B cell (primary cell): ENCODE measurements at regions of chr3 and their contacts with region 1.

Region 1: GRCh38 chr3:152524198-152525140 is 255.7 kb downstream of the MBNL1 start:
- DNase-seq: peak; percentile 76
- ATAC-seq: peak; percentile 68
- H3K4me3 ChIP-seq: no peak overlapping the region
- H3K4me3 Mint-ChIP-seq: no peak overlapping the region
- H3K27ac ChIP-seq: no peak overlapping the region
- H3K27ac Mint-ChIP-seq: no peak overlapping the region
- H3K4me1 ChIP-seq: peaks cover 5 to 6% of the 10 kb centered on the region in 2 donors
- H3K4me1 Mint-ChIP-seq: peaks cover 22% of the 10 kb centered on the region
- H3K27me3 ChIP-seq: no peaks in the 10 kb centered on the region
- H3K27me3 Mint-ChIP-seq: no peaks in the 10 kb centered on the region
- CTCF ChIP-seq: peak; percentile 98

Region 2: GRCh38 chr3:152071924-152072323 is 452.5 kb before region 1 on chr3:
- CTCF ChIA-PET with region 1: interaction called, 14 read pairs
- POLR2A ChIA-PET with region 1: no interaction called
- intact Hi-C with region 1: loop called (anchors 1 kb)
- DNase-seq: peak; percentile 30
- ATAC-seq: no peak
- H3K4me3 ChIP-seq: no peak overlapping the region
- H3K4me3 Mint-ChIP-seq: no peak overlapping the region
- H3K27ac ChIP-seq: no peak overlapping the region
- H3K27ac Mint-ChIP-seq: no peak overlapping the region
- H3K4me1 ChIP-seq: no peaks in the 10 kb centered on the region
- H3K4me1 Mint-ChIP-seq: no peaks in the 10 kb centered on the region
- H3K27me3 ChIP-seq: peaks cover 0 to 3% (median 0%) of the 10 kb centered on the region in 4 experiments
- H3K27me3 Mint-ChIP-seq: no peaks in the 10 kb centered on the region
- CTCF ChIP-seq: peak; percentile 49

Region 3: GRCh38 chr3:152466784-152467183 is 57.7 kb before region 1 on chr3:
- CTCF ChIA-PET with region 1: interaction called, 73 read pairs
- POLR2A ChIA-PET with region 1: no interaction called
- intact Hi-C with region 1: no loop called
- DNase-seq: peak; percentile 55
- ATAC-seq: peak; percentile 71
- H3K4me3 ChIP-seq: no peak overlapping the region
- H3K4me3 Mint-ChIP-seq: no peak overlapping the region
- H3K27ac ChIP-seq: peak overlapping the region in 1 of 2 donors; percentile 32
- H3K27ac Mint-ChIP-seq: peak overlapping the region; percentile 59
- H3K4me1 ChIP-seq: peaks cover 3 to 10% of the 10 kb centered on the region in 2 donors
- H3K4me1 Mint-ChIP-seq: peaks cover 20% of the 10 kb centered on the region
- H3K27me3 ChIP-seq: no peaks in the 10 kb centered on the region
- H3K27me3 Mint-ChIP-seq: no peaks in the 10 kb centered on the region
- CTCF ChIP-seq: peak; percentile 78

Region 4: DNA sequence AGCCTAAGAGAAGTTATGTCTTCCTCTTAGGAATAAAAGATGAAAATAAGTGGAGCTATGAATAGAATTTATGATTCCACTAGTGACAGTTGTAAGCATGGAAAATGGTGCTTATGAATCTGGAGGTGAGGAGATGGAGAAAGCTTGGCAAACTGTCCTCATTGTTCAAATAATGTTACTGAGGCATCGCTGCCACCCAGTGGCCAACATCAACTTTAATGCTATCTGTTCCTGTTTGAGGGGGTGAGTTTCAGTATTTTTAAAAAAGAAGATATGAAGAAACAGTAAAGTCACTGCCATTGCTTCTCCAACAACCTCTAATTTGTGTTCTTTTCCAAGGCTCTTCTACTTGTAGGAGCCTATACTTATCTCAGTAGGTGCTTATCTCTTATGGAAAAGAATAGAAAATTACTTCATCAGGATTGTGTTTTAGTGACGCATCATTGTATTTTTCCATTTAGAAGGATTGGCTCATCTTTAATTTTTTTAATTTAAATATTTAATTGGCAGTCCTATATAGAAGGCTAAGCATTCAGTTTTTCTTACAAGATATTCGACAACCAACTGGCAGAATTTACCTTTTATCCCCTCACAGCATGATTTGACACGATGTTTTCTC is 50.1 kb after region 1 on chr3:
- CTCF ChIA-PET with region 1: interaction called, 13 read pairs
- POLR2A ChIA-PET with region 1: no interaction called
- intact Hi-C with region 1: no loop called
- DNase-seq: peak; percentile 65
- ATAC-seq: peak; percentile 61
- H3K4me3 ChIP-seq: no peak overlapping the region
- H3K4me3 Mint-ChIP-seq: no peak overlapping the region
- H3K27ac ChIP-seq: no peak overlapping the region
- H3K27ac Mint-ChIP-seq: no peak overlapping the region
- H3K4me1 ChIP-seq: no peaks in the 10 kb centered on the region
- H3K4me1 Mint-ChIP-seq: peaks cover 2% of the 10 kb centered on the region
- H3K27me3 ChIP-seq: no peaks in the 10 kb centered on the region
- H3K27me3 Mint-ChIP-seq: no peaks in the 10 kb centered on the region
- CTCF ChIP-seq: peak; percentile 74

Region 5: DNA sequence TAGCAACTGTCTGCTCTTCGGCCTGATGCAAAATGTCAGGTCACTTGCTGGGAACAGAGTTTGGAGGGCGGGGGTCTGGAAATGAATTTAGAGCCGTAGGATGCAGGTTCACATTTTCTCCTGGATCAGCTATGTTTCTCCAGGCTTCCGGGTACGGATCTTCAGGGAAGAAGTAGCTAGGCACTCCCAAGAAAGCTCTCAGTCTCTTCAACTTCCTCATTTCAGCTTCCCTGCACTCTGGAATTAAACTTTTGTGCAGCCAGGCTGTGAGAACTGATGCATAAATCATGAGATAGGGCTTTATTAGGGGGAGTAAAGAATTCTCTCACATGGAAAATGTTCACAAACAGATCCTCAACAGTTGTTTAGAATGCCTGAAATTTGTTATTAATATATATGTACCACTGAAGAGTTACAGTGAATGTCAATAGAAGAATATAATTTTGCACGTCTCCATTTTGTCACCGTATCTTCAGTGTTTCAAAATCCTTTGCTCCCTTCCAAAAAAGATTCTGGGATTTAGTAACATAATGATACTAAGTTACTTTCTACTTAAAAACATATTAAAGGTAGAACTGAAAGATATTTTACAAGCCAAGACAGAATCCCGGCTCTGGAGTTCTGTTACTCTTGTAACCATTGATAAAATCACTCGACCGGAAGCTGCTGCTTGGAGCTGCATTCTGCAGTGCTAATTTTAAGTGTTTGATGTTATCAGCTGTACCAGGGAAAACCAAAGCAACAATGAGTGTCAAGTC is 131.9 kb after region 1 on chr3:
- CTCF ChIA-PET with region 1: no interaction called
- POLR2A ChIA-PET with region 1: no interaction called
- intact Hi-C with region 1: no loop called
- DNase-seq: no peak
- ATAC-seq: no peak
- H3K4me3 ChIP-seq: no peak overlapping the region
- H3K4me3 Mint-ChIP-seq: no peak overlapping the region
- H3K27ac ChIP-seq: no peak overlapping the region
- H3K27ac Mint-ChIP-seq: no peak overlapping the region
- H3K4me1 ChIP-seq: peaks cover 2 to 4% of the 10 kb centered on the region in 2 donors
- H3K4me1 Mint-ChIP-seq: peaks cover 8% of the 10 kb centered on the region
- H3K27me3 ChIP-seq: peaks cover 0 to 3% (median 0%) of the 10 kb centered on the region in 4 experiments
- H3K27me3 Mint-ChIP-seq: peaks cover 24% of the 10 kb centered on the region
- CTCF ChIP-seq: no peak

Region 6: GRCh38 chr3:152885076-152885475 is 360.6 kb after region 1 on chr3:
- CTCF ChIA-PET with region 1: no interaction called
- POLR2A ChIA-PET with region 1: no interaction called
- intact Hi-C with region 1: no loop called
- DNase-seq: no peak
- ATAC-seq: no peak
- H3K4me3 ChIP-seq: no peak overlapping the region
- H3K4me3 Mint-ChIP-seq: no peak overlapping the region
- H3K27ac ChIP-seq: no peak overlapping the region
- H3K27ac Mint-ChIP-seq: no peak overlapping the region
- H3K4me1 ChIP-seq: no peaks in the 10 kb centered on the region
- H3K4me1 Mint-ChIP-seq: no peaks in the 10 kb centered on the region
- H3K27me3 ChIP-seq: no peaks in the 10 kb centered on the region
- H3K27me3 Mint-ChIP-seq: peaks cover 3% of the 10 kb centered on the region
- CTCF ChIP-seq: no peak